Aorta (tissue), 5 donors: ENCODE measurements at regions of chr14 and their contacts with region 1.

Region 1: DNA sequence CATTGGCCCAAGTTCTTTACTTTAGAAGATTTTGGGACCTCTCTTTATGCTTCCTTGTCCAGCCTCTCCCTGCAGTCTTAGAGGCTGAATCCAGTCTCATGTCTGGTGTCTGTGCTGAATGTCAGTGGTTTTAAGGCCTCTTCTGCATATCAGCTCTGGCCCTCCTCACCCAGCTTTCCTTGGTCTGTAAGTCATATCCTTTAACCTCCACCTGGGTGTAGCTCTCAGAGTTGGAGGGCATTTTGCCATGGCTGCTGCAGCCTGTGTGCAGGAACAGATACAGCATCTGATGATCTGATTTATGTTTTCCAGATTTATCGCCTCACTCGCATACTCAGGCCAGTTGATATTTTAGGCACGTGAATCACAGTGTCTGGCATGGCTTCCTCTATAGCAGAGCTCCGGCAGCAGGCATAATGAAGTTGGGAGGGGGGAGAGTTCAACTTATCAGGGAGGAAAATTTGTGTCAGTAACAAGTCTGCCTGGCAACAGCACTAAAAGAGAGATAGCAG is 335.0 kb downstream of the PCNX1 start:
- DNase-seq: peak in 1 of 2 donors; percentile 77
- ATAC-seq: peak; percentile 76
- H3K4me3 ChIP-seq: no peak overlapping the region
- H3K27ac ChIP-seq: peak overlapping the region; percentile 46 to 89
- H3K4me1 ChIP-seq: peaks cover 5 to 9% of the 10 kb centered on the region in 2 donors
- H3K27me3 ChIP-seq: no peaks in the 10 kb centered on the region

Region 2: DNA sequence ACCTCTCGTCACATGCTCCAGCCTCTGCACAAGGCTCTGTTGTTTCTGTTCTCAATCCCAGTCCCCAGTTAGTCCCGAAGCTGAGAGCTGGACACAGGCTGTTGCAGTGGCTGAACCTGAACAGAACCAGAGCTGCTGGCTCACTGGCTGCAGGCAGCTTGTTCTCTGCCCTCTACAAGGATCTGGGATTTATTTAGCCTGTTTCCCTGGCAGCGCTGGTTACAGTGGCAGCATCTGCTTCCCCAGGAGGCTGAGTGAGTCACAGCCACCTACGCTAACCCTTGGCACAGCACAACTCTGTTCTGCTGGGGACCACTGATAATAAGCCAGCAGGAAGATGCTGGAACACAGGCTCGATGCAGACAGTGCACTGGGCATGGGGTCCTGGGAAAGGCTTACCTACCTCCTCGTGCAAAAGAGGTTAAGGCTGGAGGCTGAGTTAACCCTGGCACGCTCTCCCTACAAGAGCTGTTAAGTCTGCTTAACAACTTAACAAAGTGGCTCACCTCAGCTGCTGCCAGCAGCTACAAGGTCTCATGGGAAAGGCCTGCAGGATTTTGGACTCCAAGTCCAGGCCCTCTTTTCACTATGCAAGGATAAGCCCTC is 35.4 kb before region 1 on chr14:
- intact Hi-C with region 1: loop called in 1 of 2 experiments (anchors 5 kb)
- DNase-seq: peak; percentile 88 to 92
- ATAC-seq: peak; percentile 90
- H3K4me3 ChIP-seq: no peak overlapping the region
- H3K27ac ChIP-seq: peak overlapping the region in 1 of 2 donors; percentile 34
- H3K4me1 ChIP-seq: no peaks in the 10 kb centered on the region
- H3K27me3 ChIP-seq: no peaks in the 10 kb centered on the region